AG04449 (cell line): ENCODE measurements at regions of chr6 and their contacts with region 1.

Region 1: DNA sequence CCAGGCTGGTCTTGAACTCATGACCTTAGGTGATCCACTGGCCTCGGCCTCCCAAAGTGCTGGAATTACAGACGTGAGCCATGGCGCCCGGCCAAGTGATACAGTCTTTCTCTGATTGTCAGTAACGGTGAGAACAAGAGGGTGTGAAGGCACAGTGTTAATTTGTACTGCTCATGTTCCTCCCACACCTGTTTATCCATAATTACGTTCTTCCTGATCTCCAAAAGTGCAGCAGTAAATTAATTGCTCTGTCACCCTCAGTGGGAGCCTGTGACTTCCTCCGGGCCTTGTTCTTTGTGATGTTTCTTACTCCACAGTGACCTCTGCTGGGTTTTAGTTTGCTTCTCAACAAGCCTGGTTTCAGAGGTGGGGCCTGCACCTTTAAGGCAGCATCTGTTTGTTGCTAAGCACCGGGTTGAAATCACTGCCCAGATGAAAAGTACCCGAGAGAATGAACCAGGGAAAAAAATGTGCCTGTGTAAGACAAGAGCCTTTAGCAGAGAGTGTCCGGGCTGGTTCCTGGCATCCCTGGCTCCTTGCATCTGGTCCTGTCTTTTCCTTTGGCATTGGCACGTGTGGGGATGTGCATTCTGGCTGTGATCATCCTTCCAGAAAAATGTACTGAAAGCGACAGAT is 89.1 kb upstream of the CLDN20 start:
- DNase-seq: no peak
- H3K4me3 ChIP-seq: no peak overlapping the region
- CTCF ChIP-seq: peak; percentile 53

Region 2: DNA sequence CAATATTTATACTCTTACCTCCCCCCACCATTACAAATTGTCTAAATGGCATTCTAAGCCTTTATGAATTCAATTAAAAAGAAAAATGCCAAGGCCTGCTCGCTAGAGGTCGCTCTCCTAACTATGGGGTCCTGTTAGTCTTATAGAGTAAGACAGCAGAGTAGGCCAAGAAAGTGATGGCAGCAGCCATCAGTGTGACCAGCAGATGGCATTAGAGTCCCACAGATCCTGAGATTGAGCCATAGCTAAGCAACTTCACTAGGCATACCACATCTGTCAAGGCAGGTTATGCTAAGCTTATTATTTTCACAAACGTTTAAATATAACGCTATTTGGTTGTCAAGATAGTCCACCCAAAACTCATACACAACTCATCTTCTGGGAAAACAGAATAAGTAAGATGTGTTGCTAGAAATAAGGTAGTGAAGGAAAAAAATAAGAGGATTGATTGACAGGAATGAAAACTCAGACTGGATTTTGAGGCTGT is 499.0 kb before region 1 on chr6:
- CTCF ChIA-PET with region 1: interaction called, 40 read pairs
- POLR2A ChIA-PET with region 1: no interaction called
- DNase-seq: peak; percentile 88
- H3K4me3 ChIP-seq: no peak overlapping the region
- CTCF ChIP-seq: peak; percentile 88

Region 3: DNA sequence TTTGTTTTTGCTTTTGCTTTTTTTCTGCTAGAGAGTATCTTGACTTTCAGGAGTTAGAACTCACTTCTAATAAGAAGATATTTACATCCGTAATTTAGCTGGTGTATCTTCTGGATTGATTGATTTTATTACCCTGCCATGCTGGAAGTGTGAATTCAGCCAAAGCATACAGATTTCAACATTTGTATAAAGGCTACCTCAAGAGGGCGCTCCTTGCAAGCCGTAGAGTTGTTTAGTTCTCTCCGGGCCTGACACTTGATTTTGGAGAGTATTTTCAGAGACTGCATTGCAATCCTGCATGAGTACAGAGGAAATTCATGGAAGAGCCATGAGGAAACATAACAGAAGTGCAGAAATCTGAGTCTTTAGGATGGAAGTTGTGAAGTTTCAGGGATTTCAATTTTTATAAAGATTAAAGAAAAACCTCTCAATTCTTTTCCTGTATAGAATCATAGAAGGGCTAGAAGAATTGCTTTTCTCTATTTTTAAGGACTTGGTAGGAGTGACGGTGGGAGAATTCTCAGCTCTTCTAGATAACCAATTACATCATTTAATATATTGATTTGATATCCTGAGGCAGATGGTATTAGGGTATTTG is 246.3 kb before region 1 on chr6:
- CTCF ChIA-PET with region 1: interaction called, 247 read pairs
- POLR2A ChIA-PET with region 1: interaction called, 4 read pairs
- DNase-seq: no peak
- H3K4me3 ChIP-seq: no peak overlapping the region
- CTCF ChIP-seq: peak; percentile 53

Region 4: GRCh38 chr6:155188707-155189496 is 14.2 kb after region 1 on chr6:
- CTCF ChIA-PET with region 1: interaction called, 34 read pairs
- POLR2A ChIA-PET with region 1: no interaction called
- DNase-seq: peak; percentile 98
- H3K4me3 ChIP-seq: no peak overlapping the region; the same call in 1 of the 2 replicates
- CTCF ChIP-seq: no peak

Region 5: GRCh38 chr6:155216312-155217046 is 41.8 kb after region 1 on chr6:
- CTCF ChIA-PET with region 1: no interaction called
- POLR2A ChIA-PET with region 1: no interaction called
- DNase-seq: no peak
- H3K4me3 ChIP-seq: no peak overlapping the region
- CTCF ChIP-seq: no peak

Region 6: DNA sequence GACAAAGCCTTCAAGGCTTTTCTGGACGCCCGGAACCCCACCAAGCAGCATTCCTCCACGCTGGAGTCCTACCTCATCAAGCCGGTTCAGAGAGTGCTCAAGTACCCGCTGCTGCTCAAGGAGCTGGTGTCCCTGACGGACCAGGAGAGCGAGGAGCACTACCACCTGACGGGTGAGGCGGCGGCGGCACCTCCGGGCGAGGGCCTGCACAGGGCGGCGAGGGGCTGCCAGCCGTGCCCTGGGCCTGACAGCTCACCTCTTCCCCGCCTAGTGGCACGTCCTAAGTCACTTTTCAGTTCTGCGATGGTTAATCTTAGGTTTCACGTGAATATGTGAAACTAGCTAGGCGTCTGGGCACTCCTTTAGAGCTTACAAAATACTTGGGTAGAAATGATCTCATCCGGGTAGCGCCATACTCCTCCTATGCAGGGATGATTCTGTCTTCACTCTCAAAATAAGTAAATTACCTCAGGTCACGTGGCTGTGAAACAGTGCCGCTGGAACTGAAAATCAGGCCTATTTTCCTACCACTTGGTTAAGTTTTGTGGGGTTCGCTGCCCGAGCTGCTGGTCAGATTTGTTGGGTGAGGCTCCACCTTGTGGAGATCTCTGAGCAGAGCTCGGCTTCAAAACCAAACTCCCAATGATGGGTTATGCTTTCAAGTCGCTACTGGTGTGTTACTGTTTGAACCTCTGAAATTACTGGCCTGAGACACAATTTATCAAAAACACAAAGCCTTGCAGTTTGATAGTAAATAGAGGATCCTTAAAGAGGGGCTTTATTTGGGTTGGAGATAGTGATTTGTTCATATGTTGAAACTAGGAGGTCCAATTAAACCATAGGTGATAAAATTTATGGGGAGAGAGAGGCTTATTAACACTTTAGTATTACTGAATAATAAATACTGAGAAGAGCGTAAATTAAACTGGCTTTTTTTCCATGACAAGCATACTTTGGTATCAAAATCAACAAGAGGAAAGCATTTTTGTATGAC is 73.6 kb after region 1 on chr6:
- CTCF ChIA-PET with region 1: interaction called, 292 read pairs
- POLR2A ChIA-PET with region 1: no interaction called
- DNase-seq: peak; percentile 56
- H3K4me3 ChIP-seq: no peak overlapping the region
- CTCF ChIP-seq: peak; percentile 80

Region 7: GRCh38 chr6:155265843-155266535 is 91.3 kb after region 1 on chr6:
- CTCF ChIA-PET with region 1: interaction called, 34 read pairs
- POLR2A ChIA-PET with region 1: no interaction called
- DNase-seq: no peak
- H3K4me3 ChIP-seq: no peak overlapping the region
- CTCF ChIP-seq: no peak

Region 8: GRCh38 chr6:155314092-155314772 is 139.5 kb after region 1 on chr6 and contains the start of gene TFB1M:
- CTCF ChIA-PET with region 1: interaction called, 80 read pairs
- POLR2A ChIA-PET with region 1: no interaction called
- DNase-seq: peak; percentile 89
- H3K4me3 ChIP-seq: peak within 1 kb of the TSS; percentile 88
- CTCF ChIP-seq: no peak